ENCODE measurements at regions of chr7 and their contacts with region 1.

Region 1: DNA sequence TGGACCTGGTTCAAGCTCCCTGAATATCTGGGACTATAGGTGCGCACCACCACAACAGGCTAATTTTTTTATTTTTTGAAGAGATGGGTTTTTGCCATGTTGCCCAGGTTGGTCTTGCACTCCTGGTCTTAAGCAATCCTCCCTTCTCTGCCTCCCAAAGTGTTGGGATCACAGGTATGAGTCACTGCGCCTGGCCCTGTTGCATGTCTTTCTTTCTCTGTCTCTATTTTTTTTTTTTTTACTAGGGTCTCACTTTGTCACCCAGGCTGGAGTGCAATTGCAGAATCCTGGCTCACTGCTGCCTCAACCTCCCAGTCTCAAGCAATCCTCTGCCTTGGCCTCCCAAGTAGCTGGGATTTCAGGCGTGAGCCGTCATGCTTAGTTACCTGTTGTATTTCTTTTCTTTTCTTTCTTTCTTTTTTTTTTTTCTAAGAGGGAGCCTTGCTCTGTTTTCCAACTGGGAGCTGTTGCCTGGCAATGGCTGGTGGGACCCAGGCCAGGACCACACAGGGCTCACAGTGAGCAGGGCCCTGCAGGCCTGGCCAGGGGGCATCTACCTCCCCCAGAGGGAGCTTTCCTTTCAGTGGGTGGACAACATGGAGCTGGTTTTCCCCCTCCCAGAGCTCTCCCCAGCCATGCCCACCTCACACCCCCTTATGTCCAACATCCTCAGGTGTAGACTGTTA is 6.0 kb downstream of the MYL7 start:
- DNase-seq: peak in 1 of 2 donors; percentile 11
- ATAC-seq: no peak
- H3K4me3 ChIP-seq: no peak overlapping the region
- H3K27ac ChIP-seq: no peak overlapping the region
- H3K4me1 ChIP-seq: peaks cover 8% of the 10 kb centered on the region
- H3K27me3 ChIP-seq: no peaks in the 10 kb centered on the region
- CTCF ChIP-seq: no peak

Region 2: DNA sequence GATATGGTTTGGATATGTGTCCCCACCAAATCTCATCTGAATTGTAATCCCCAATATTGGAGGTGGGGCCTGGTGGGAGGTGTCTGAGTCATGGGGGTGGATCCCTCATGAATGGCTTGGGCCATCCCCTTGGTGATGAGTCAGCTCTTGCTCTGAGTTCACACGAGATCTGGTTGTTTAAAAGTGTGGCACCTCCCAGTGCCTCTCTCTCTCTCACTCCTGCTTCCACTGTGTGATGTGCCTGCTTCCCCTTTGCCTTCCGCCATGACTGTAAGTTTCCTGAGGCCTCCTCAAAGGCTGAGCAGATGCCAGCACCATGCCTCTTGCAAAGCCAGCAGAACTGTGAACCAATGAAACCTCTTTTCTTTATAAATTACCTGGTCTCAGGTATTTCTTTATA is 59.0 kb after region 1 on chr7:
- intact Hi-C with region 1: loop called in 1 of 2 experiments (anchors 5 kb)
- DNase-seq: no peak
- ATAC-seq: no peak
- H3K4me3 ChIP-seq: no peak overlapping the region
- H3K27ac ChIP-seq: no peak overlapping the region
- H3K4me1 ChIP-seq: no peaks in the 10 kb centered on the region
- H3K27me3 ChIP-seq: peaks cover 0 to 2% (median 0%) of the 10 kb centered on the region in 3 donors
- CTCF ChIP-seq: no peak

Measured in psoas muscle (tissue), 8 donors.